Activated T-helper 1 cell treated with anti-CD3 and anti-CD28 coated beads, Interleukin-12 subunit alpha, Interleukin-12 subunit beta, Interleukin-2, Interleukin-4 antibody, amounts not matched to agents 30 ng/mL and 10 ng/mL and 1 ng/mL, durations not matched to agents 14 hours and 24 hours and 36 hours (primary cell): ENCODE measurements at regions of chr14 and their contacts with region 1.

Region 1: GRCh38 chr14:21233457-21234076 is 35.7 kb downstream of the HNRNPC start:
- DNase-seq: no peak
- H3K4me3 Mint-ChIP-seq: peak overlapping the region; percentile 37
- H3K27ac Mint-ChIP-seq: peak overlapping the region; percentile 40
- H3K4me1 Mint-ChIP-seq: peaks cover 82% of the 10 kb centered on the region
- H3K27me3 Mint-ChIP-seq: no peaks in the 10 kb centered on the region

Region 2: GRCh38 chr14:21215130-21215878 is 18.3 kb before region 1 on chr14:
- intact Hi-C with region 1: loop called (anchors 2 kb)
- DNase-seq: no peak
- H3K4me3 Mint-ChIP-seq: peak overlapping the region; percentile 49
- H3K27ac Mint-ChIP-seq: peak overlapping the region; percentile 84
- H3K4me1 Mint-ChIP-seq: peaks cover 56% of the 10 kb centered on the region
- H3K27me3 Mint-ChIP-seq: no peaks in the 10 kb centered on the region

Region 3: GRCh38 chr14:21220874-21221477 is 12.6 kb before region 1 on chr14:
- intact Hi-C with region 1: loop called (anchors 1 kb)
- DNase-seq: no peak
- H3K4me3 Mint-ChIP-seq: no peak overlapping the region
- H3K27ac Mint-ChIP-seq: peak overlapping the region; percentile 71
- H3K4me1 Mint-ChIP-seq: peaks cover 48% of the 10 kb centered on the region
- H3K27me3 Mint-ChIP-seq: no peaks in the 10 kb centered on the region

Region 4: DNA sequence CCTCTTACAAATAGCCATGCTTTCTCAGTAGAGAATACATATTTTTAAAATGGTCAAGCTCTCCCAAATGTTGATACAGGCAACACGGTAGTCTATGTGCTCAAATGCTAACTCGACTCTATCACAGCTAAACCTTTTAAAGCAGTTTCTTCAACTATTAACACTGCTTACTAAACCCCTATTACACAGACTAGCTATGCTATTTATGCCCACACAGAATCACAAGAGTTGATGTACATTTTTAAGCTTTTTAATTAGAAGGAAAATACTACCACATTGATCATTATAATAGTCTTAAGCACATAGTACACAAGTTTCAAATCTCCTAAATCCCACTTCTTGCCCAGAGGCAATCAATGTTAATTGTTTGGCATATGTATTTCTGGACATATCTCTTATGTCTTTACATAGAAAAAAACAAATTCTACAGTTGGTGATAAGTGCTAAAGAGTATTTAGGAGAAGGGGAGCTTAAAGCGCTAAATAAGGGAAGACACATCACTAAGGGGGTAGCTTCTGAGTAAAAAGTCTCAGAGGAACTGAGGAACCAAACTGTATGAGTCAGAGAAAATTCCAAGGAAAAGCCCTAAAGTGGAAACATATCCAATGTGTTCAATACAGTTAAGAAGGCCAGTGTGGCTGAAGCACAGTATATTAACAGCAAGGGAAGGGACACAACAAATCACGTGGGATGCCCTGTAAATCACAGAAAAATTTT is 22.0 kb after region 1 on chr14:
- intact Hi-C with region 1: loop called (anchors 2 kb)
- DNase-seq: no peak
- H3K4me3 Mint-ChIP-seq: peak overlapping the region; percentile 28
- H3K27ac Mint-ChIP-seq: peak overlapping the region; percentile 67
- H3K4me1 Mint-ChIP-seq: peaks cover 54% of the 10 kb centered on the region
- H3K27me3 Mint-ChIP-seq: no peaks in the 10 kb centered on the region

Region 5: DNA sequence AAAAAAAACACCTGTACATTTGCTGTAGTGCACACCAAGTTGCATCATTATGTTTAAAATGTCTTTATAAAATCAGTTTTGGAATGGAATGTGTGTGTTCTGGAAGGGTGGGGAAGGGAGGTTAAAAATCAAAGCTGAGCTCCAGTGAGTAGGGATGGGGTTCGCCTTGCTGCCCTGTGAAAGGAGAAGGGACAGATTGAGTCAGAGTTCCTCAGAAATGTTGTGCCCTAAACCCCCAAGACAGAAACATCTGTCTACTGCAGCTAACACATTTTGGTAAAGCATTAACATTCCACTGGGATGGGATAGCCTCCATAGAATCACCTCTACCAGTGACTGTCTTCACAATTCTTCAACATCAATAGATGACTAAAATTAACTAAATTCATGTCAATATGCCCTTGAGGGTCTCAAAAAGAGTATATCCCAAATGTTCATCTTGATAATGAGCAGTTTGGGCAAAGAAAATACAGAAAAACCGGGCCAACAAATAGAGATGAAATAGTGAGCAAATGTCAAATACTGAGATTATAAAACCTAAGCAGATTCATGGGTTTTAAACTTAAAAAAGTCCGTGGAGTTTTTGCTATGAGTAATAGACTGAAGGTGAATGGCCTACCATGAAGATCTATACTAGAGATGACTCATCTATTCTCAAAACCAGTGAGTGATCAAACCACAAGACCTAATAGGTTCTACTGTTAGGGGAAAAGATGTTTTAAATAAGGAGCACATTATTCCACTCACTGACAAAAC is 30.3 kb after region 1 on chr14:
- intact Hi-C with region 1: loop called (anchors 1 kb)
- DNase-seq: no peak
- H3K4me3 Mint-ChIP-seq: peak overlapping the region; percentile 99
- H3K27ac Mint-ChIP-seq: peak overlapping the region; percentile 91
- H3K4me1 Mint-ChIP-seq: peaks cover 70% of the 10 kb centered on the region
- H3K27me3 Mint-ChIP-seq: no peaks in the 10 kb centered on the region

Region 6: DNA sequence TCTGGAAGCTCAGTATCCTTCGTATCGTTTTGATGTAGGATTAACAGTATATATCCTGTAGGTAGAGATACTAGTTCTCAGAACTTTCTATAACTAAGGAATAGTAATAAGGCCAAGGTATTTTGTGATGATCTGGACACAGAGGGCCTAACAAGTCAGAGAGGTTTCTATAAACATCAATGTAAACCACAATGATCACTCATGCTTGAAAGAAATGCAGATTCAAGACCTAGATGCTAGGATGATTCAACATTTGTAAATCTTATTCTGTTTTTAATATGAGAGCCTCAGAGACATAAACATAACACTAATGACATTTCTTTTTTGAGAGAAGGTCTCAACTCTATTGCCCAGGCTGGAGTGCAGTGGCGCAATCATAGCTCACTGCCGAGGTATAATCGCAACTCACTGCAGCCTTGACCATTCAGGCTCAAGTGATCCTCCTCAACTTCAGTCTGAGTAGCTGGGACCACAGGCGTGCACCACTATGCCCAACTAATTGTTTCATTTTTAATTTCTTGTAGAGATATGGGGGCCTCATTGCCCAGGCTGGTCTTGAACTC is 134.1 kb after region 1 on chr14:
- intact Hi-C with region 1: loop called (anchors 5 kb)
- DNase-seq: no peak
- H3K4me3 Mint-ChIP-seq: no peak overlapping the region
- H3K27ac Mint-ChIP-seq: no peak overlapping the region
- H3K4me1 Mint-ChIP-seq: peaks cover 10% of the 10 kb centered on the region
- H3K27me3 Mint-ChIP-seq: no peaks in the 10 kb centered on the region

Region 7: GRCh38 chr14:21455911-21456667 is 222.5 kb after region 1 on chr14 and contains the start of gene CHD8:
- intact Hi-C with region 1: no loop called
- DNase-seq: peak; percentile 100
- H3K4me3 Mint-ChIP-seq: peak within 1 kb of the TSS; percentile 96
- H3K27ac Mint-ChIP-seq: peak within 1 kb of the TSS; percentile 95
- H3K4me1 Mint-ChIP-seq: peaks cover 40% of the 10 kb centered on the region
- H3K27me3 Mint-ChIP-seq: no peaks in the 10 kb centered on the region
- total RNA-seq, gene CHD8: 126 and 131 TPM in 2 replicates